Tibial artery (tissue), 4 donors: ENCODE measurements at regions of chr5 and their contacts with region 1.

Region 1: GRCh38 chr5:776792-777711 is 7.5 kb downstream of the ZDHHC11B start:
- DNase-seq: no peak
- H3K4me3 ChIP-seq: peak overlapping the region; percentile 6 to 24
- H3K27ac ChIP-seq: no peak overlapping the region
- H3K4me1 ChIP-seq: peaks cover 0 to 5% (median 0%) of the 10 kb centered on the region in 4 donors
- H3K27me3 ChIP-seq: no peaks in the 10 kb centered on the region
- CTCF ChIP-seq: no peak

Region 2: GRCh38 chr5:691817-692528 is 85.1 kb before region 1 on chr5:
- intact Hi-C with region 1: loop called (anchors 5 kb)
- DNase-seq: no peak
- H3K4me3 ChIP-seq: peak overlapping the region; percentile 59 to 73
- H3K27ac ChIP-seq: no peak overlapping the region
- H3K4me1 ChIP-seq: peaks cover 0 to 5% (median 0%) of the 10 kb centered on the region in 4 donors
- H3K27me3 ChIP-seq: no peaks in the 10 kb centered on the region
- CTCF ChIP-seq: no peak